ENCODE measurements at regions of chr17 and their contacts with region 1.

Region 1: DNA sequence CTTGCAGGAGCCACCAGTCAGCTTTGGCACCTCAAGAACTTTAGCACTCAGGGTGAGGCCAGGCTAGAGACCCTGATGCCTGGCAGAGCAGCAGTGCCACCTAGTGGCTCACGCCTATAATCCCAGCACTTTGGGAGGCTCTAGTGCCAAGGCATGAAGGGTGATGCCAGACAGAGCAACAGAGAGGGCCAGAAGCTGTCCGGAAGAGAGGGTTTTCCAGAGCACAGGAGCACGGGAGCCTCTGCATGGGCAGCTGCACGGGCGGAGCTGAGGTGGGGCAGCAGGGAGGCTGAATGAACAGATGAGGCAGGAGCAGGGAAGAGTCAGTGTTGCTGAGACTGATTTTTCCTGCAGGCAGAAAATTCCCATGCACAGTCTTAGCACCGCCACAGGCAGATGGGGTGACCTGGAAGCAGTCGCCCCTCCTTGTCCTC is 38.9 kb downstream of the MYH3 start:
- DNase-seq: peak; percentile 54
- ATAC-seq: peak; percentile 92
- H3K4me3 Mint-ChIP-seq: no peak overlapping the region
- H3K27ac Mint-ChIP-seq: no peak overlapping the region
- H3K4me1 Mint-ChIP-seq: peaks cover 6% of the 10 kb centered on the region
- H3K27me3 Mint-ChIP-seq: peaks cover 7% of the 10 kb centered on the region
- CTCF ChIP-seq: no peak

Region 2: DNA sequence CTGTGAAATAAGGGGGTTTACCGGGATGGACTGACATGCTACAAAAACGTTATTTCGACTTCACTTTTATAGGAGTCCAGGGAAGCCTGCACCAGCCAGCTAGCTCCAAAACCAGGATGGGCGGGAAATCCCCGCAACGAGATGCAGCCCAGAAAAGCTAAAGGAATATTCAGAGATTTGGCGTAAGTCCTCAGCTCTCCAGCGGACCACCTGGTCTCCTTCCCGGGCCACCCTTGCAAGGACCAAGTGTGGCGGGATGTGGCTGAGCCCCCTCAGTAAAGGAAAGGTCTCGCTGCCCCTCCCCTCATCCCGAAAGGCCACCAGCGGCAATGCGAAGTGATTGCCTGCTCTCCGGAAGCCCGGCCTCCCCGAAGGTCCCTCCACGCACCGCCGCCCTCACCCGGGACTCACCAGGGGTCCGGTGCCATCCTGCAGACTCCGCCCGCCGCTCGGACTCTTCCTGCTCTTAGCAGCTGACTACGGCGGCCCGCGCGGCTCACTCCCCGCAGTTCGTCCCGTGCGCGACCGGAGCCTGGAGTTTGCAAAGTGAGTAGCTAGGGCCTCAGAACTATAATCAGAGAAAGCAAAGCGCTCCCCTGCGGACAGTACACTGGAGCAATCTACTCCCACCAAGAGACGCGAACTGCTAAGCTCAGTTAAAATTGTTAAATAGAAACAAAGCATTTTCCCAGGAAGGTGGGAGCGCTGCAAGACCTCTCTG is 1042.7 kb before region 1 on chr17 and contains the start of gene STX8:
- CTCF ChIA-PET with region 1: interaction called, 4 read pairs
- POLR2A ChIA-PET with region 1: no interaction called
- intact Hi-C with region 1: loop called (anchors 10 kb)
- DNase-seq: peak; percentile 80
- ATAC-seq: peak; percentile 84
- H3K4me3 Mint-ChIP-seq: peak within 1 kb of the TSS; percentile 99
- H3K27ac Mint-ChIP-seq: peak within 1 kb of the TSS; percentile 87
- H3K4me1 Mint-ChIP-seq: peaks cover 29% of the 10 kb centered on the region
- H3K27me3 Mint-ChIP-seq: no peaks in the 10 kb centered on the region
- CTCF ChIP-seq: no peak
- total RNA-seq, gene STX8: 66.9 and 71.7 TPM in 2 replicates

Region 3: DNA sequence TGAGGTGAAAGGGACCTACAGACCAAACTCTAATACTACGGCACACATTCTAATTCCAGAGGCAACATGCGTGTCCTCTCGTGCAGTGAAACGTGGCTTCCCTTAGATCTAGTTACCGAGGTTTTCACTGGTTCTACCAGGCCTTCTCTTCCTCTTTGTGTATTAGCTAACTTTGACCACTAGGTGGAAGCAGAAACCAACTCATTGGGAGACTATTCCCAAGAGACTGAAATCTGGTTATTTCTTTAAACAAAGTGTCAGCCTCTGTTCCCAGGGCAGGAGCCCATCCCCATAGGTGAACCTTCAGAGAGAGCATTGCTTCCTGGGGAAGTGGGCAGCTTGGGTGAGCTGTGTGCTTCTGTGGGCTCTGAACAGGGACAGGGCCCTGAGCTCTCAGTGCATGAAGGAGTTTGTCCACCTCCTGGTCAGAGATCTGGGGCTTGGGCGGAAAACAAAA is 693.5 kb before region 1 on chr17:
- CTCF ChIA-PET with region 1: interaction called, 56 read pairs
- POLR2A ChIA-PET with region 1: interaction called, 3 read pairs
- intact Hi-C with region 1: loop called (anchors 1 kb)
- DNase-seq: peak; percentile 31
- ATAC-seq: peak; percentile 77
- H3K4me3 Mint-ChIP-seq: no peak overlapping the region
- H3K27ac Mint-ChIP-seq: no peak overlapping the region
- H3K4me1 Mint-ChIP-seq: peaks cover 5% of the 10 kb centered on the region
- H3K27me3 Mint-ChIP-seq: no peaks in the 10 kb centered on the region
- CTCF ChIP-seq: peak; percentile 87

Region 4: DNA sequence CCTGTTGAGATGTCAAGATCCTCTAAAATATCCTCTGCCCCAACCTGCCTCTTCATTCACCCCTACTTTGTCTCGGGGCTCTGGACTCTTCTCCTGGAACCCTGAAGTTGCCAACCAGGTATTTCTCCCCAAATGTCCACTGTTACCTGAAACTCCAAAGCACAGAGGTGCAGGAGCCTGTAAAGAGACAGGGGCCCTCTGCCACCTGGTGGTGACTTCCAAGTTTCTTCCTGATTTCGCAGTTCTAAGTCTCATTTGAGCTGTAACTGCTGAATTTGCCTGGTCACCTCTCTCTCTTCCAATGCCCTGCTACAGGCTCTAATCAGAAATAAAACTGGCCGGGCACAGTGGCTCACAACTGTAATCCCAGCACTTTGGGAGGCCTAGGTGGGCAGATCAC is 636.1 kb before region 1 on chr17:
- CTCF ChIA-PET with region 1: no interaction called
- POLR2A ChIA-PET with region 1: no interaction called
- intact Hi-C with region 1: no loop called
- DNase-seq: no peak
- ATAC-seq: no peak
- H3K4me3 Mint-ChIP-seq: no peak overlapping the region
- H3K27ac Mint-ChIP-seq: no peak overlapping the region
- H3K4me1 Mint-ChIP-seq: peaks cover 5% of the 10 kb centered on the region
- H3K27me3 Mint-ChIP-seq: no peaks in the 10 kb centered on the region
- CTCF ChIP-seq: no peak

Region 5: DNA sequence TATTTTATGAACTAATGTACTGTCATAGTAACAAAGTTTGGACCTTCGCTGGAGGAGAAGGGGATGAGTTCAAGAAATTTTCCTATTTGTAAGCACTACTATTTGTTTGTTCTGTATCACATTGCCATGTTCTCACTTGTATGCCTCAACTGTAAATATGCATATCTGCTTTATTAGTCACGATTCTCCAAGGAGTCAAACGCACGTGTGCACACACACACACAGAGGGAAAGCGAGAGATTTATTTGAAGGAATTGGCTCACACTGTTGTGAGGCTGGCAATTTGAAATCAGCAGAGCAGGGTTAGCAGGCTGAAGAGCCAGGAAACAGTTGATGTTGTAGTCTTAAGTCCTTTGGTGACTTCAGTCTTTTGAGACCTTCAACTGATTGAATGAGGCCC is 43.9 kb before region 1 on chr17:
- CTCF ChIA-PET with region 1: no interaction called
- POLR2A ChIA-PET with region 1: no interaction called
- intact Hi-C with region 1: no loop called
- DNase-seq: no peak
- ATAC-seq: no peak
- H3K4me3 Mint-ChIP-seq: no peak overlapping the region
- H3K27ac Mint-ChIP-seq: no peak overlapping the region
- H3K4me1 Mint-ChIP-seq: no peaks in the 10 kb centered on the region
- H3K27me3 Mint-ChIP-seq: peaks cover 13% of the 10 kb centered on the region
- CTCF ChIP-seq: no peak

Region 6: DNA sequence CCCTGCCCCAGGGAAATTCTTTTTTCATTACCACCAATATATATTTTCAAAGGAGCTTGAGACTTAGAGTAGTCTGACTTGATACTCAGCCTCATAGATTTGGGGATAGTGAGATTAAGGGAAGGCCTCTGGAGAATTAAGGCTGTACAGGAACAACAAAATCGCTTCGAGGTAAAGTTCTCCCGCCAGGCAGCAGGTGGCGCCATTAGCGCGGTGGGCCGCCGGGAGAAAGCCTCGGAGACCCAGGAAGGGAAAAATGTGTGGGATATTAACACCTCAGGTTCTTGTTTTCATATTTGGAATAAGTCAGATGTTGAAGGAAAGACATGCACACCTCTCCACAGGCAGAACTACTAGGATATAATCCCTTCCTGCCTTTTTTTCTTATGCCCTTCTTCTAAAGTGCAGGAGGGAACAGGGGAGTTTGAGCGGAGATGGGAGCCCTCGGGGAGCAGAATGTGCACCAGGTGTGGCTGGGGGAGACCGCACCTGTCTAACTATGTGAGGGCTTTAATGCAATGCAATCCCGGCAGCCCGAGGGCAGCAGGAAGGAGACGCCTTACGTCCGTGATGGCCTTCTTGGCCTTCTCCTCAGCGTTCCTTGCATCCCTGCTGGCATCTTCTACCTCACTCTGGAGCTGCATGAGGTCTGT is 13.0 kb after region 1 on chr17:
- CTCF ChIA-PET with region 1: interaction called, 47 read pairs
- POLR2A ChIA-PET with region 1: interaction called, 7 read pairs
- intact Hi-C with region 1: no loop called
- DNase-seq: no peak
- ATAC-seq: no peak
- H3K4me3 Mint-ChIP-seq: no peak overlapping the region
- H3K27ac Mint-ChIP-seq: no peak overlapping the region
- H3K4me1 Mint-ChIP-seq: peaks cover 27% of the 10 kb centered on the region
- H3K27me3 Mint-ChIP-seq: no peaks in the 10 kb centered on the region
- CTCF ChIP-seq: peak; percentile 63

Region 7: GRCh38 chr17:10668771-10669170 is 50.6 kb after region 1 on chr17:
- CTCF ChIA-PET with region 1: no interaction called
- POLR2A ChIA-PET with region 1: no interaction called
- intact Hi-C with region 1: no loop called
- DNase-seq: no peak
- ATAC-seq: no peak
- H3K4me3 Mint-ChIP-seq: no peak overlapping the region
- H3K27ac Mint-ChIP-seq: no peak overlapping the region
- H3K4me1 Mint-ChIP-seq: no peaks in the 10 kb centered on the region
- H3K27me3 Mint-ChIP-seq: no peaks in the 10 kb centered on the region
- CTCF ChIP-seq: no peak

Region 8: GRCh38 chr17:10844621-10845387 is 226.6 kb after region 1 on chr17:
- CTCF ChIA-PET with region 1: interaction called, 6 read pairs
- POLR2A ChIA-PET with region 1: no interaction called
- intact Hi-C with region 1: loop called (anchors 1 kb)
- DNase-seq: peak; percentile 44
- ATAC-seq: peak; percentile 94
- H3K4me3 Mint-ChIP-seq: peak overlapping the region; percentile 81
- H3K27ac Mint-ChIP-seq: no peak overlapping the region
- H3K4me1 Mint-ChIP-seq: peaks cover 9% of the 10 kb centered on the region
- H3K27me3 Mint-ChIP-seq: peaks cover 16% of the 10 kb centered on the region
- CTCF ChIP-seq: peak; percentile 57

Region 9: GRCh38 chr17:10920558-10921108 is 302.4 kb after region 1 on chr17:
- CTCF ChIA-PET with region 1: no interaction called
- POLR2A ChIA-PET with region 1: no interaction called
- intact Hi-C with region 1: no loop called
- DNase-seq: no peak
- ATAC-seq: no peak
- H3K4me3 Mint-ChIP-seq: no peak overlapping the region
- H3K27ac Mint-ChIP-seq: no peak overlapping the region
- H3K4me1 Mint-ChIP-seq: no peaks in the 10 kb centered on the region
- H3K27me3 Mint-ChIP-seq: no peaks in the 10 kb centered on the region
- CTCF ChIP-seq: no peak